ENCODE measurements at regions of chr7 and their contacts with region 1.

Region 1: DNA sequence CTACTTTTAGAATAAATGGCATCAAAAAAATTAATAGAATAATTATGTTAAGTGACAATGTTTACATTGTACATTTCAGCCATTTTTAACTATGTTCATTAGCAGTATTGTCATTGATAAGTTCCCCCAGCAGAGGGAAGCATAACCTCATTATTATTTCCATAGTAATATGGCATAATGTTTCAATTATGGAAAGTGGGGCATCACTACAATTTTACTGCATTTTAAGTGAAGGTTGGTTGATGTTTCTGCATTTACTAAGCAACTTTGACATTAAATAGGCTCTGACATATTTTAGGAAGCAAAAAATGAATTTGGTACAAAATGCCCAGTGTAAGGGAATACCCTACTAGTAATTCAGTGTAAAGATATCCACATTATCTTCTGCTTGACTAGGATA is 218.3 kb downstream of the SEMA3A start:
- DNase-seq: peak; percentile 22
- ATAC-seq: peak; percentile 70; the same call in 2 of the 3 replicates
- H3K4me3 ChIP-seq: no peak overlapping the region
- H3K27ac ChIP-seq: no peak overlapping the region
- H3K4me1 ChIP-seq: no peaks in the 10 kb centered on the region
- H3K27me3 ChIP-seq: no peaks in the 10 kb centered on the region
- CTCF ChIP-seq: peak; percentile 72
- EP300 ChIP-seq: no peak
- POLR2A ChIP-seq: no peak
- RAD21 ChIP-seq: peak; percentile 71

Region 2: DNA sequence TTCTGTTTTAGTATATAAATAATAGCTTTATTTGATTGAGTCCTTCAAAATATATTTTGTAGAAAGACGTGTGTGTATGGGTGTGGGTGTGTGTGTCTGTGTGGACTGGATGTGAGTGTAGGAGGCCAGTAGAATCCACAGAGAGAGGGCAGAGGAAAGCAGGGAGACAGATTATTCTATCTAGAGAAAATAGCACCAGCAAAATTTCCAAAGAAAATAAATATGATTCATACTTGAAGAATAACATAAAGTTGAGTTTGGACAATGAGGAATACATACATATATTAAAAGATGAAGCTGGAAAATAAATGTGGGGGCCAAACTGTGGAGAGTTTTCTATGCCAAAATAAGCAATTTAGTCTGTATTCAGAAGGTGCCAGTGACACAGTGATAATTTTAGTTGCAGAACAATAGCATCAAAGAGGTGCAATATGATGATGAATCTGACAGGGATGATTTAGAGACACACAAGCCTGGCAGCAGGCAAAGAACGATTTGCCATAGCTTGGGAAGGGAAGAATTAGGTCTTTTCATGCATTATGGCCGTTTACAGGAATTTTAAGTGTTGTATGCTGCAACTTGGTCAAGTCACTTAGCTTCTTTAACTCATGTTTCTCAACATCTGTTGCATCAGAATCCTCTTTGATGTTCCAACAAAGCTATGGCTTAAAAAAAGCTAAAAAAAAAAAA is 97.0 kb after region 1 on chr7:
- CTCF ChIA-PET with region 1: no interaction called
- POLR2A ChIA-PET with region 1: no interaction called
- in situ Hi-C with region 1: no loop called
- intact Hi-C with region 1: loop called (anchors 5 kb)
- DNase-seq: peak; percentile 44
- ATAC-seq: no peak
- H3K4me3 ChIP-seq: no peak overlapping the region
- H3K27ac ChIP-seq: no peak overlapping the region
- H3K4me1 ChIP-seq: peaks cover 11% of the 10 kb centered on the region
- H3K27me3 ChIP-seq: no peaks in the 10 kb centered on the region
- CTCF ChIP-seq: no peak
- EP300 ChIP-seq: peak in 1 of 2 experiments; percentile 46; a peak in 1 of 4 replicates
- POLR2A ChIP-seq: no peak
- RAD21 ChIP-seq: no peak

Region 3: GRCh38 chr7:84188786-84189405 is 212.6 kb after region 1 on chr7:
- CTCF ChIA-PET with region 1: interaction called, 7 read pairs
- POLR2A ChIA-PET with region 1: no interaction called
- in situ Hi-C with region 1: loop called (anchors 5 kb)
- intact Hi-C with region 1: loop called (anchors 1 kb)
- DNase-seq: peak; percentile 6
- ATAC-seq: no peak; the same call in 2 of the 3 replicates
- H3K4me3 ChIP-seq: no peak overlapping the region
- H3K27ac ChIP-seq: no peak overlapping the region
- H3K4me1 ChIP-seq: no peaks in the 10 kb centered on the region
- H3K27me3 ChIP-seq: no peaks in the 10 kb centered on the region; a peak in 1 of 5 replicates
- CTCF ChIP-seq: peak; percentile 40
- EP300 ChIP-seq: no peak
- POLR2A ChIP-seq: no peak
- RAD21 ChIP-seq: no peak

Region 4: GRCh38 chr7:84455788-84456187 is 479.5 kb after region 1 on chr7:
- CTCF ChIA-PET with region 1: no interaction called
- POLR2A ChIA-PET with region 1: no interaction called
- in situ Hi-C with region 1: loop called (anchors 10 kb)
- intact Hi-C with region 1: loop called (anchors 2 kb)
- DNase-seq: no peak
- ATAC-seq: no peak
- H3K4me3 ChIP-seq: no peak overlapping the region
- H3K27ac ChIP-seq: no peak overlapping the region
- H3K4me1 ChIP-seq: peaks cover 13% of the 10 kb centered on the region
- H3K27me3 ChIP-seq: no peaks in the 10 kb centered on the region
- CTCF ChIP-seq: no peak
- EP300 ChIP-seq: no peak
- POLR2A ChIP-seq: no peak
- RAD21 ChIP-seq: no peak

Region 5: DNA sequence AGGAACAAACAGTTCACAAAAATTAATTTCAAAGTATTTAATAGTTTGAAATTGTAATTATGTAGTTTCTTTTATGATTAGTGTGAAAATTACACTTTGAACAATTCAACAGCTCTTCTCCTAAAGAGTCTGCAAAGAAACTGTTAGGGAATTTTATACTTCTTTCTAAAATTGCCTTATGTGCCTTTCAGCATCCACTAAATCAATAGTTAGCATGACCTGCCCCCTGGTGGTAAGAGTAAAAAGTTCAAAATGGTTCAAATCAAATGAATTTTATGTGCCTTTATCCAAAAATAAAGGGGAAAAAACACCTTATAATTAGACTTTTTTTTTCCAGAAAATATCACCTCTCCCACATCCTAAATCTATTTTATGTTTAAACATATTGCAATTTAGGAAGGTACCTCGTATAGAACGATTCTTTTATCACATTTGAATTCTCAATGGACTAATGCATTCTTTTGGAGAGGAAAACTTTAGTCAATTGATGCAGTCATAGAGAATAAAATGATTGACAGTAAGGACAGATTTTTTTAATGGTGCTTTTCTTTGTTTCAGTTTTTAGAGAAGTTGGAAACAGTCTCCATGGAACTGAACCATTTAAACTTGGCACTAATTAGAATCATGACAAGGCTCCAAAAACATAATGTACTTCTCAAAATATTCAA is 1046.9 kb after region 1 on chr7:
- CTCF ChIA-PET with region 1: interaction called, 31 read pairs
- POLR2A ChIA-PET with region 1: no interaction called
- in situ Hi-C with region 1: loop called (anchors 5 kb)
- intact Hi-C with region 1: loop called (anchors 1 kb)
- DNase-seq: peak; percentile 21
- ATAC-seq: no peak
- H3K4me3 ChIP-seq: no peak overlapping the region
- H3K27ac ChIP-seq: no peak overlapping the region
- H3K4me1 ChIP-seq: no peaks in the 10 kb centered on the region
- H3K27me3 ChIP-seq: no peaks in the 10 kb centered on the region
- CTCF ChIP-seq: peak; percentile 64
- EP300 ChIP-seq: no peak
- POLR2A ChIP-seq: no peak
- RAD21 ChIP-seq: no peak